Activated naive CD4-positive, alpha-beta T cell treated with anti-CD3 and anti-CD28 coated beads for 36 hours (primary cell): ENCODE measurements at regions of chr20 and their contacts with region 1.

Region 1: DNA sequence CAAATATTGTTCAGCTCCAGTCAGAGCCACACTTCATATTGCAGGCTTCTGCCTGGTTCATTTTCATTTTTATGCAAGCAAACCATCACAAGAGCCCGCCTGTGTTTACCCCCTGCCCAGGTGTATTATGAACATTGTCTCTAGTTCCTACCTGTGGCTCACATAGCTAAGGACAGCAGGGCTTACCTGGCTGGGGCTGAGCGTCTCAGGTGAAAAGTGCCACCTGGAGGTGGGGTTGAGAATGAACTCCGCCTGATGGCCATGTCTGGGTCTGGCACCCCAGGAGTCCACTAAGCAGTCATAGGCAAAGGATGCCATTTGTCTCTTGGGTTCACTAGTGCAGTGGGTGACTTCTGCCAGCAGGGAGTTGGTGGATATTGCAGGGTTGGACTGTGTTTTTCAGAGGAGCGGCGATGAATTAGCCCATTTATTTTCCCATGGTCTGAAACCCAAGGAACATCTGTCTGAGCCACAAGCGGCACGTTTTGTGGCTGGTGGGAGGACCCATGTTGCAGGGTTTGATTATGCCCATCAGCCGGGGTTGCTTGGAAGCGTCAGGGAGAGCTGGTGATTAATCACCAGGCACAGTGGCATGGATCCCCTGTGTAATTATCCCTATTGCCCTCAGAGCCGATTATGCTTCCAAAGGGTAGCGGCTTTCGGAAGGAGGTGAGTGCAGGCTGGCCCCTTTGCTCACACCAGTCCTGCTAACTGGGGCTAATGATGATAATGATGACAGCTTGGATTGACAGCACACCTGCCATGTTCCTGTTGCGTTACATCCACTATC is 92.1 kb downstream of the CDH26 start:
- DNase-seq: no peak
- H3K4me3 Mint-ChIP-seq: no peak overlapping the region
- H3K27ac Mint-ChIP-seq: no peak overlapping the region
- H3K4me1 Mint-ChIP-seq: peaks cover 9% of the 10 kb centered on the region
- H3K27me3 Mint-ChIP-seq: peaks cover 1% of the 10 kb centered on the region

Region 2: GRCh38 chr20:59948828-59949720 is 101.3 kb before region 1 on chr20:
- CTCF ChIA-PET with region 1: interaction called, 21 read pairs
- intact Hi-C with region 1: loop called (anchors 1 kb)
- DNase-seq: peak; percentile 56
- H3K4me3 Mint-ChIP-seq: no peak overlapping the region
- H3K27ac Mint-ChIP-seq: peak overlapping the region; percentile 93
- H3K4me1 Mint-ChIP-seq: peaks cover 23% of the 10 kb centered on the region
- H3K27me3 Mint-ChIP-seq: no peaks in the 10 kb centered on the region